ENCODE measurements at regions of chr7 and their contacts with region 1.

Region 1: DNA sequence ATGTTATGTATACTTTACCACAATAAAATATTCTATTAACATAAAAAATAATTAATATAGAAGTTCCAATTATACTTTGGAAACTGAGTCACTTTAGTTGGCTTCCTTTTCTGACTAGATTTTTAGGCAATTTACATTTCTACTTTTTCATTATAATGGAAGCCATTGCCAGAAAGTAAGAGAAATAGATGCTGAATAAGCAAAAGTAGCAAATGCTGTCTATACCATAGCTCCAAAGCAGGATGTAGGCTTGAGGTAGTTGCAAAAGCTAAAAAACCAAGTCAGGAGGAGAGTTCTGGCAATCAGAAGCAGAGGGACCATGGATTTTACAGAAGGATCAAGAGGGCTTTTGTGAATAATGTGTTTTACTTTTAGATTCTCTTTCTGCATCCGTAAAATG is 262.4 kb upstream of the TMEM229A start:
- DNase-seq: no peak
- ATAC-seq: no peak
- H3K4me3 ChIP-seq: no peak overlapping the region
- H3K27ac ChIP-seq: no peak overlapping the region
- H3K4me1 ChIP-seq: no peaks in the 10 kb centered on the region
- H3K27me3 ChIP-seq: no peaks in the 10 kb centered on the region
- CTCF ChIP-seq: no peak

Region 2: GRCh38 chr7:124257638-124258308 is 37.5 kb before region 1 on chr7:
- intact Hi-C with region 1: loop called in 1 of 10 experiments (anchors 1 kb)
- DNase-seq: no peak
- ATAC-seq: peak in 3 of 8 donors; percentile 55 to 81 (median 80)
- H3K4me3 ChIP-seq: no peak overlapping the region
- H3K27ac ChIP-seq: peak overlapping the region in 2 of 10 donors; percentile 15 to 41
- H3K4me1 ChIP-seq: peaks cover 0 to 19% (median 4%) of the 10 kb centered on the region in 9 donors
- H3K27me3 ChIP-seq: no peaks in the 10 kb centered on the region
- CTCF ChIP-seq: no peak

Region 3: DNA sequence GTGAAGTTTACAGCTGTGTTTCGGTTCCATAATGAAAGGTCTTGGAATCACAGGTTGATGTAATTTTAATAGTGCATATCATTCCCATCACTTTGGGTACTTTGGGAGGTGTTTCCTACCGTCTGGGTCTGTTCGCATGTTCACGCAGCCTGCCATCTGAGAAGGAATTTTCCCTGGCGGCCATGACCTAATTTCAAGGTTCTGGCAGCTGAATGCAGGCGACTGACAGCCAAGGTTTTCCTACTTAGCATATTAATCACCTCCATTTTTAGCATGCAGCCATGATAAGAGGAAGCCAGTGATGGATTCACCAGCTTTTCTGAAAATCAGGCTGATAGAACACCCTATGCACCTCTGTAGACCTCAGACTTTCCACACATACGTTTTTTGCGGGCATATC is 56.7 kb after region 1 on chr7:
- intact Hi-C with region 1: loop called in 1 of 10 experiments (anchors 10 kb)
- DNase-seq: peak; percentile 11 to 33
- ATAC-seq: peak in 5 of 8 donors; percentile 42 to 81 (median 61)
- H3K4me3 ChIP-seq: no peak overlapping the region
- H3K27ac ChIP-seq: no peak overlapping the region
- H3K4me1 ChIP-seq: peaks cover 0 to 7% (median 0%) of the 10 kb centered on the region in 9 donors
- H3K27me3 ChIP-seq: no peaks in the 10 kb centered on the region
- CTCF ChIP-seq: no peak

Region 4: GRCh38 chr7:124366118-124366517 is 70.8 kb after region 1 on chr7:
- intact Hi-C with region 1: no loop called
- DNase-seq: no peak
- ATAC-seq: no peak
- H3K4me3 ChIP-seq: no peak overlapping the region
- H3K27ac ChIP-seq: no peak overlapping the region
- H3K4me1 ChIP-seq: no peaks in the 10 kb centered on the region
- H3K27me3 ChIP-seq: no peaks in the 10 kb centered on the region
- CTCF ChIP-seq: no peak

Region 5: GRCh38 chr7:124597509-124597908 is 302.2 kb after region 1 on chr7:
- intact Hi-C with region 1: no loop called
- DNase-seq: no peak
- ATAC-seq: no peak
- H3K4me3 ChIP-seq: no peak overlapping the region
- H3K27ac ChIP-seq: no peak overlapping the region
- H3K4me1 ChIP-seq: no peaks in the 10 kb centered on the region
- H3K27me3 ChIP-seq: no peaks in the 10 kb centered on the region
- CTCF ChIP-seq: no peak